Mammary epithelial cell (primary cell): ENCODE measurements at regions of chr20 and their contacts with region 1.

Region 1: DNA sequence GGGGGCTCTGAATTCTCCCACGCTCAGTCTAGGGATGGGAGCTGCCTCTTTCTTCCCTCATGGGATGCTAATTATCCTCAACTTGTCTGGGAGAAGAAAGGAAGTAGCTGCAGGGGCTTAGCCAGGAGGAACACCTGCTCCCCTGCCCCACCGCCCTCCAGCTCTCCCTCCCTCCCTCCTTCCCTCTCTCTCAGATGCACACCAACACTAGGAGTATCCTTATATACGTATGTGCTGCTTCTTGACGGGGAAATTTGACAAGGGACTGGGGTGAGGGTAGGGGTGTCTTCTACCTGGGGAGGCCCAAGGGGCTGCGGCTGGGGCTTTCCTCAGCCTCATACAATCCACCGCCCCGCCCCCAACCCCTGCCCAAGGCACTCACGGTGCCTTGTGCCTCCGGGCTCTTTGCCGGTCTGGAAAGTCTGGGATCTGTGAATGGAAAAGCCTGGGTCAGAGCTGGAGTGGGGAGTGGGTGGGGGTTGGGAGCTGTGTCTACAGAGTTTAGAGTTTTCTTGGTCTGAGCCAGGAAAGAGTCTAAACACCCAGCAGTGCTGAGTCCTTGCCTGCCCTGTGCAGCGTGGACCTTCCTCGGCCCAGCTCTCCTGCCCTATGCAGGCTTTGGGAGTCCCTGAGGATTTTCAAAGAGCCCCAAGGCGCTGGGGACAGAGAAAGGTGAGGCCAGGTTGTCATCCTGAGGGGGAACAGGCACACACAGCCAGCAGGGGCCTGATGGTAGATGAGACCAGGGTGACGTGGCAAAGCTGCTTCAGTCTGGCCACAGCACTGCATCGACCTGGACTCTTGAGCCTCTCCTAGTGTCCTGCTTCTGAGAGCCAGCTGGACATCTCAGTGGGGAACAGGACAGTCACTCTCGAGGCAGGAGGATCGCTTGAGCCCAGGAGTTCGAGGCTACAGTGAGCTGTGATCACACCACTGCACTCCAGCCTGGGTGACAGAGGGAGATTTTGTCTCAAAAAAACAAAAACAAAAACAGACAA is 29.3 kb upstream of the EMILIN3 start:
- DNase-seq: no peak
- H3K4me3 ChIP-seq: no peak overlapping the region
- H3K27ac ChIP-seq: no peak overlapping the region
- H3K4me1 ChIP-seq: peaks cover 19% of the 10 kb centered on the region
- H3K27me3 ChIP-seq: no peaks in the 10 kb centered on the region
- CTCF ChIP-seq: no peak

Region 2: GRCh38 chr20:41329435-41330342 is 66.3 kb before region 1 on chr20:
- CTCF ChIA-PET with region 1: no interaction called
- dilution Hi-C with region 1: no loop called
- in situ Hi-C with region 1: no loop called
- intact Hi-C with region 1: no loop called
- DNase-seq: peak; percentile 95
- H3K4me3 ChIP-seq: no peak overlapping the region
- H3K27ac ChIP-seq: peak overlapping the region; percentile 71
- H3K4me1 ChIP-seq: peaks cover 22% of the 10 kb centered on the region
- H3K27me3 ChIP-seq: no peaks in the 10 kb centered on the region
- CTCF ChIP-seq: no peak

Region 3: GRCh38 chr20:41347523-41348429 is 48.2 kb before region 1 on chr20:
- CTCF ChIA-PET with region 1: no interaction called
- dilution Hi-C with region 1: loop called (anchors 5 kb)
- in situ Hi-C with region 1: no loop called
- intact Hi-C with region 1: no loop called
- DNase-seq: no peak
- H3K4me3 ChIP-seq: no peak overlapping the region
- H3K27ac ChIP-seq: no peak overlapping the region
- H3K4me1 ChIP-seq: no peaks in the 10 kb centered on the region
- H3K27me3 ChIP-seq: no peaks in the 10 kb centered on the region
- CTCF ChIP-seq: no peak